PC-9 (cell line): ENCODE measurements at regions of chr3 and their contacts with region 1.

Region 1: GRCh38 chr3:51610708-51611107 is 60.3 kb upstream of the TEX264 start:
- DNase-seq: no peak
- H3K4me3 ChIP-seq: no peak overlapping the region
- H3K27ac ChIP-seq: no peak overlapping the region
- H3K4me1 ChIP-seq: no peaks in the 10 kb centered on the region
- H3K27me3 ChIP-seq: no peaks in the 10 kb centered on the region
- CTCF ChIP-seq: no peak

Region 2: DNA sequence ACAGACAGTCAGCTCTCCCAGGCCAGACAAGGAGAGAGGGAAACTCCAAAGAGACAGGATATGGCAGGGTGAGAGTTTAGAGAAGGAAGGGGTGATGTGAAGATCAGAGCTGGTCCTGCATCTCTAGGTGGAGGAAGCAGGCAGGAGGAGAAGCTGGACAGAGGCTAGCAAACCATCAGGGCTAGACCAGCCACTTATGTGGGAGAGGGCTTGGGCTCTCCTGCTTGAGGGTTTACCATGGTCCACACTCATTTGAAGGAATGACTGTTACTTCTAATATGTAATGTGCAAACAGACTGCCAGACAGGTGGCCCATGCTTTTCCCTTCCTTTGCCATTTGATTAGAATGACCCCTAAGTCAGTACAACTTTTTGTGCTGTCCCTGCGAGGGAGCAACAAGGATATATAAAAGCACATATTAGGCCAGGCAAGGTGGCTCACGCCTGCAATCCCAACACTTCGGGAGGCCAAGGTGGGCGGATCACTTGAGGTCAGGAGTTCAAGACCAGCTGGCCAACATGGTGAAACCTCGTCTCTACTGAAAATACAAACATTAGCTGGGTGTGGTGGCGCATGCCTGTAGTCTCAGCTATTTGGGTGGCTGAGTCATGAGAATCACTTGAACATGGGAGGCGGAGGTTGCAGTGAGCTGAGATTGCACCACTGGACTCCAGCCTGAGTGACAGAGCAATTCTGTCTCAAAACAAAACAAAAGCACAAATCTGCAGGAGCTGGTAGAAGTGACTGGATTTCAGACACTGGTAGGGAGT is 266.6 kb before region 1 on chr3:
- CTCF ChIA-PET with region 1: no interaction called
- POLR2A ChIA-PET with region 1: no interaction called
- intact Hi-C with region 1: no loop called
- DNase-seq: peak; percentile 73 to 90
- H3K4me3 ChIP-seq: no peak overlapping the region
- H3K27ac ChIP-seq: peak overlapping the region; percentile 81
- H3K4me1 ChIP-seq: peaks cover 54% of the 10 kb centered on the region
- H3K27me3 ChIP-seq: no peaks in the 10 kb centered on the region
- CTCF ChIP-seq: no peak

Region 3: DNA sequence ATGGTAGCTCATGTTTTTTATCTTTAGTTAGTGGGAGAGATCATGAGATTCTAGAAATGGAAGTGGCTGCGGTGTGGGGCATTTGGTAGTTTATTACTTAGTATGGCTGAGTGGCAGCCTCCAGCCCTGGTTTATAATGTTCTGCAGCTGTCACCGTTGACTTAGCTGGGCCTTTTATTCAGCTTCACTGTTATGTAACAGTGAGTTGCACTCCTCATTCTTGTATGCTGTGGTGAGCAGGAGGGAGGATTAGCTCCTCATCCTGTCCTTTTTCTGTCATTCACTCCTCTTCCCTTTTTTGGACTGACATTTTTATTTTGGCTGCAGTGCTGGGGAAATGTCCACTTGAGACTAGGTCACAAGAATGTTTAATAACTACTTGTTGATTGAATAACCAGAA is 42.7 kb before region 1 on chr3:
- CTCF ChIA-PET with region 1: no interaction called
- POLR2A ChIA-PET with region 1: interaction called, 21 read pairs
- intact Hi-C with region 1: no loop called
- DNase-seq: no peak
- H3K4me3 ChIP-seq: no peak overlapping the region
- H3K27ac ChIP-seq: no peak overlapping the region
- H3K4me1 ChIP-seq: no peaks in the 10 kb centered on the region
- H3K27me3 ChIP-seq: no peaks in the 10 kb centered on the region
- CTCF ChIP-seq: no peak